Activated T-helper 1 cell treated with anti-CD3 and anti-CD28 coated beads, Interleukin-12 subunit alpha, Interleukin-12 subunit beta, Interleukin-2, Interleukin-4 antibody, amounts not matched to agents 30 ng/mL and 10 ng/mL and 1 ng/mL, durations not matched to agents 14 hours and 24 hours and 36 hours (primary cell): ENCODE measurements at regions of chr9 and their contacts with region 1.

Region 1: DNA sequence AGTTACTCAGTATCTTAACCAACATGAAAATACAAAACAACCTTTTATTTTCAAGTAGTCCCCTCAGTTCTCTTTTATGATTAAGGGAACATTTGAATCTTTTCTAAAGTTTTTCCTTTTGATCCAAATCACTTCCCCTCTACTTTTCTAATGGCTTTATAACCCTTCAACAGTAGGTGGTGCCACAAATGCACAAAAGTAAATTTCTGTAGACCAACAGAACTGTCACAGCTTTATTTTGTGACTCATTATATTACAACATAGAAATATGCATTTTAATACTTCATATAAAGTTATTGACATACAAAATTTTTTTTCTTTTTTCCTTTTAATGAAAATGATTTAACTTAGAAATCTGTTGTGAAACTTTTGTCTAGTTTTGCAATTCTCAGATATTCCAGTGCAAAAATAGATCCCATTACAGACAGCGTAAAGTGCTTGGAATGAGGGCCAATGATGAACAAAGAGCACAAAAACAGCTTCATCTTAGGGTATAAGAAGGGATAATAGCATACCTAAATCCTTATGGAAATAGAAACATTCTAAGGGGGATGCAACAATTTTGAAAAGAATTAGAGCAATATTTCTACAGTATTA is 17.0 kb downstream of the NIPSNAP3B start:
- DNase-seq: no peak
- H3K4me3 Mint-ChIP-seq: no peak overlapping the region
- H3K27ac Mint-ChIP-seq: no peak overlapping the region
- H3K4me1 Mint-ChIP-seq: no peaks in the 10 kb centered on the region
- H3K27me3 Mint-ChIP-seq: no peaks in the 10 kb centered on the region

Region 2: GRCh38 chr9:105157130-105157583 is 376.3 kb after region 1 on chr9:
- intact Hi-C with region 1: loop called (anchors 1 kb)
- DNase-seq: no peak
- H3K4me3 Mint-ChIP-seq: no peak overlapping the region
- H3K27ac Mint-ChIP-seq: no peak overlapping the region
- H3K4me1 Mint-ChIP-seq: peaks cover 6% of the 10 kb centered on the region
- H3K27me3 Mint-ChIP-seq: no peaks in the 10 kb centered on the region

Region 3: DNA sequence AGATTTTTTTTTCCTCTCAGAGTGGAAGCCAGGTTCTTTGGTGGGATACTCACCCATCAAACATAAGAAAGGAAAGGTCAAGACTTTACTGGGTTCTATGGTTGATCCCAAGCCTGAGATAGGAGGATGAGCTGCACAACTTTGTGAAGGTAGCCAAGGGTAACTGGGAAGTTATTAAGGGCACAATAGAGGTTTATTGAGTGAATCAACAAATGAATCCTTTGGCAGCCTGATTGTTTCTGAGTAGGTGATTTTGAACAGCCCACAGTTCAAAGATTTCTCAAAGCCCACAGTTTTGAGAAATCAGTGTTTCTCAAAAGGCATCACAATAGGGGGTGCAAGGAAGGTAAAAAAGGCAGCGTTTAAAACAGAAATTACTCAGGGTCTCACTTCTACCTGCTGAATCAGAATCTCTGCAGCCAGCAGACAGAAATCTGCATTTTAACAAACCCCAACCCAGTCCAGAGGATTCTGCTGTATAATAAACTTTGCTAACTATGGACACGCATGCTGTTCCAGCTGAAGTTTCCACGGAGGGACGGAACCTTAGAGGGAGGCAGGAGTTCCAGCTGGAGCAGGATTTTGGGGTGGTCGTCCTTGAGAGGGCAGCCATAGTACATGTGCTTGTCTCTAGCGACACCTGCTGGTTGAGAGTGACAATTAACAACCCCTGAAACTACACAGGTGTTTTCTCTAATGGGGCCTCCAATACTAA is 634.2 kb after region 1 on chr9:
- intact Hi-C with region 1: loop called (anchors 2 kb)
- DNase-seq: peak; percentile 25
- H3K4me3 Mint-ChIP-seq: no peak overlapping the region
- H3K27ac Mint-ChIP-seq: no peak overlapping the region
- H3K4me1 Mint-ChIP-seq: peaks cover 13% of the 10 kb centered on the region
- H3K27me3 Mint-ChIP-seq: peaks cover 46% of the 10 kb centered on the region